CD14-positive monocyte (primary cell): ENCODE measurements at regions of chr2 and their contacts with region 1.

Region 1: GRCh38 chr2:240560480-240561326 is 546 bp downstream of the DUSP28 start:
- DNase-seq: peak; percentile 97 to 99 (median 99)
- H3K4me3 ChIP-seq: peak overlapping the region; percentile 66 to 80 (median 79)
- H3K4me3 Mint-ChIP-seq: peak overlapping the region; percentile 84 to 92
- H3K27ac ChIP-seq: peak overlapping the region; percentile 97 to 98
- H3K27ac Mint-ChIP-seq: peak overlapping the region; percentile 93 to 100 (median 97)
- H3K4me1 ChIP-seq: peaks cover 76 to 91% of the 10 kb centered on the region in 2 donors
- H3K4me1 Mint-ChIP-seq: peaks cover 73% of the 10 kb centered on the region
- H3K27me3 ChIP-seq: no peaks in the 10 kb centered on the region
- H3K27me3 Mint-ChIP-seq: peaks cover 0 to 7% (median 6%) of the 10 kb centered on the region in 3 donors
- CTCF ChIP-seq: peak; percentile 30

Region 2: GRCh38 chr2:240519396-240520129 is 41.1 kb before region 1 on chr2:
- intact Hi-C with region 1: loop called (anchors 2 to 5 kb)
- DNase-seq: no peak
- H3K4me3 ChIP-seq: no peak overlapping the region
- H3K4me3 Mint-ChIP-seq: peak overlapping the region in 1 of 2 donors; percentile 21
- H3K27ac ChIP-seq: no peak overlapping the region
- H3K27ac Mint-ChIP-seq: peak overlapping the region in 1 of 7 donors; percentile 65
- H3K4me1 ChIP-seq: peaks cover 3 to 4% of the 10 kb centered on the region in 2 donors
- H3K4me1 Mint-ChIP-seq: peaks cover 10% of the 10 kb centered on the region
- H3K27me3 ChIP-seq: peaks cover 0 to 8% of the 10 kb centered on the region in 2 donors
- H3K27me3 Mint-ChIP-seq: peaks cover 14 to 32% (median 16%) of the 10 kb centered on the region in 3 donors
- CTCF ChIP-seq: no peak